WTC11 (cell line): ENCODE measurements at regions of chr12 and their contacts with region 1.

Region 1: GRCh38 chr12:89019408-89020120 is 332.7 kb downstream of the DUSP6 start:
- DNase-seq: peak; percentile 82
- ATAC-seq: peak; percentile 97
- H3K4me3 Mint-ChIP-seq: no peak overlapping the region
- H3K27ac Mint-ChIP-seq: no peak overlapping the region
- H3K4me1 Mint-ChIP-seq: peaks cover 6% of the 10 kb centered on the region
- H3K27me3 Mint-ChIP-seq: no peaks in the 10 kb centered on the region
- CTCF ChIP-seq: peak; percentile 47; the same call in 1 of the 2 replicates

Region 2: DNA sequence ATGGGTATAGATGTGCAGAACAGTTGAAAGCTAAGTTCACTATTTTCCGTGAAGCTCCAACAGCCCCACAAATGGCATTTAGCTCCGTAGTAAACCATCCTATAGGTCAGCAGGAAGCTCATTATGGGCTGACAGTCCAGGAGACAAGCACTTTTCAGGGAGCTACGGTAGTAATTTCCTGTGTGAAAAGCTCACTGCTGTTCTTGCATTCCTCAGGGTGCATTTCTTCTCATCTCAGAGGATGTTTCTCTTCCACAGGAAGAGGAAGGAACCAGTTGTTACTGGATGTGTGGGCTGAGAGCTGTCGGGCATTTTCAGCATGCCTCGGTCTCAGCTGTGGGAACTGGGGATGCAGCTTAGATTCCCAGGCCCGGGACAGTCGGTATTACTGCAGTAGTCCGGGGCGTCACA is 432.3 kb after region 1 on chr12:
- CTCF ChIA-PET with region 1: interaction called, 10 read pairs
- POLR2A ChIA-PET with region 1: no interaction called
- DNase-seq: peak; percentile 70
- ATAC-seq: peak; percentile 89
- H3K4me3 Mint-ChIP-seq: peak overlapping the region; percentile 51
- H3K27ac Mint-ChIP-seq: peak overlapping the region; percentile 96
- H3K4me1 Mint-ChIP-seq: peaks cover 71% of the 10 kb centered on the region
- H3K27me3 Mint-ChIP-seq: no peaks in the 10 kb centered on the region
- CTCF ChIP-seq: no peak

Region 3: GRCh38 chr12:89524541-89525285 is 505.1 kb after region 1 on chr12 and contains the start of gene GALNT4:
- CTCF ChIA-PET with region 1: interaction called, 11 read pairs
- POLR2A ChIA-PET with region 1: no interaction called
- DNase-seq: peak; percentile 90
- ATAC-seq: peak; percentile 81
- H3K4me3 Mint-ChIP-seq: peak within 1 kb of the TSS; percentile 99
- H3K27ac Mint-ChIP-seq: peak within 1 kb of the TSS; percentile 92
- H3K4me1 Mint-ChIP-seq: peaks cover 23% of the 10 kb centered on the region
- H3K27me3 Mint-ChIP-seq: no peaks in the 10 kb centered on the region
- CTCF ChIP-seq: peak; percentile 31
- total RNA-seq, gene GALNT4: 2.9 to 3.9 TPM (median 3.2 TPM) in 3 replicates